ENCODE measurements at regions of chr7 and their contacts with region 1.

Region 1: GRCh38 chr7:158885624-158886023 is 29.3 kb downstream of the DYNC2I1 start:
- DNase-seq: no peak
- ATAC-seq: no peak
- H3K4me3 ChIP-seq: no peak overlapping the region
- H3K27ac ChIP-seq: no peak overlapping the region
- H3K4me1 ChIP-seq: peaks cover 0 to 5% (median 0%) of the 10 kb centered on the region in 12 donors
- H3K27me3 ChIP-seq: no peaks in the 10 kb centered on the region
- CTCF ChIP-seq: peak in 9 of 12 donors; percentile 7 to 59 (median 35)
- POLR2A ChIP-seq: no peak

Region 2: DNA sequence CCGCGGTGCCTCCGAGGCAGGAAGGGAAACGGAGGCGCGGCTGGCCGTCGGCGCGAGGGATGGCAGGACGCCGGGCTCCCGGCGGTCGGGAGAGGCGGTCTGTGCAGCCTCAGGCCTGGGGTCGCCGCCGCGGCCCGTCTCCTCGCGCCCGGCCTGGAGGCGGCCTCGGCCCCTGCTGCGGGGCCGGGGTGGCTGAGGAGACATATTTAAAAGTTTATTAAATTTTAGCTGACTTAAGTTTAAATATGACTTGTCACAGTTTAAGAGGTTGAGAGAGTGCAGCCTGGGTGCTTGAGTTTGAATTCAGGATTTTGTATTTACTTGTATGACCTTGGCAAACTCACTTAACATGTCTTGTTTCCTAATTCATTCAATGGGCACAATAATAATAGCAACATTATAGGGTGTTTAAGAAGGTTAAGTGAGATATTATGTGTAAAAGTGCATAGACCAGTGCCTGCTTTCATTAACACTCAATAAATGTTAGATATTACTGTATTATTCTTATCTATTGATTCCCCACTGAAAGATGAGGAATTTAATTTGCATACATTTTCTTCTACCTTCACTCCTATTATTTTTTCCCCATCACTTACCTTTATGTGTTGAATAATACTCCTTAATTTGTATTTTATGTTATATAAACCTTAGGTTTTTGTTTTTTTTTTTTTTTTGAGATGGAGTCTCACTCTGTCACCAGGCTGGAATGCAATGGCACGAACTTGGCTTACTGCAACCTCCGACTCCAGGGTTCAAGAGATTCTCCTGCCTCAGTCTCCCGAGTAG is 28.5 kb before region 1 on chr7:
- intact Hi-C with region 1: loop called in 1 of 10 experiments (anchors 2 kb)
- DNase-seq: no peak
- ATAC-seq: no peak
- H3K4me3 ChIP-seq: peak overlapping the region; percentile 83 to 99 (median 96)
- H3K27ac ChIP-seq: peak overlapping the region; percentile 82 to 98 (median 90)
- H3K4me1 ChIP-seq: peaks cover 11 to 51% (median 19%) of the 10 kb centered on the region in 12 donors
- H3K27me3 ChIP-seq: no peaks in the 10 kb centered on the region
- CTCF ChIP-seq: no peak
- POLR2A ChIP-seq: no peak

Region 3: DNA sequence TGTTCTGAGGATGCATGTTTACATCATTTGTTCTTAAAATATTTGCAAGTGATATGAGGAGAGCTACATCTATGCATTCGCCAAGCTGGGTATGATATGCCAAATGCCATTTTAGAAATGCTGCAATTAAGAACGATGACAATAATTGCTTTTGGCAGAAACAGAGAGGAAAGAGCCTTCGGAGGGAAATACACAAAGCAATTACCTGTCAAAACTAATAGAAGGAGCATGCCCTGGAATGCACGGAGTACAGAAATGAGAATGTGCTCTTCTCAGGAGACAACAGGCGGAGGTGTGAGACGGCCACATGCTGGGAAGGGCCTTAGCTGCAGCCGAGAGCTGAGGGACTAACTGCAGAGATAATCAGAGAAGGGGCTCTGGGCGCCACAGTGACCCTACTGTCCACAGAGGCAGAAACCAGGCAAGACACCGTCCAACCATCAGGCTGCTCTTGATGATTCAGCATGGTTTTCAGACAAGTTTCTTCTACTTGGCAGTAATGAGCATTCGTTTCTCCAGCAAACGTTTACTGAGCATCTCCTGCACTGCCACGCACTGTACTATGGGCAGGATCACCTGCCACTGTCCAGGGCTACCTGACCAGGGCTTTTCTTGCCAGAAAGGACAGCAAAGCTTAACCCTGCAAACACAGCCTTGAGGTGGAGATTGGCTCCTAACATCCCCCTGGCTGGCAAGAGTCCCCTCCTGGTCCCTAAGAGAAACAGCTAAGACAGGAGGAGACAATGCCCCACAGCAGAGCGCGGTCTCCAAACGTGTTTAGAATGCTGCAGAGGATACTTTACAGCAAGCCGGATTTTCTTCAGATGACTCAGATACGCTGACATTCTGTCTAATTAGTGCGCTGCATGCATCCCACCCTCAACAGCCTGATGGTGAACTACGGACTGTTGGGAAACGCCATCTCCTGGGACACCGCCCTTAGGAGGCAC is 241.0 kb after region 1 on chr7:
- intact Hi-C with region 1: no loop called
- DNase-seq: peak in 2 of 5 donors; percentile 10 to 12
- ATAC-seq: no peak
- H3K4me3 ChIP-seq: no peak overlapping the region
- H3K27ac ChIP-seq: no peak overlapping the region
- H3K4me1 ChIP-seq: no peaks in the 10 kb centered on the region
- H3K27me3 ChIP-seq: no peaks in the 10 kb centered on the region
- CTCF ChIP-seq: no peak
- POLR2A ChIP-seq: no peak

Measured in heart left ventricle (tissue), 16 donors.